HAP-1 (cell line): ENCODE measurements at regions of chr9 and their contacts with region 1.

Region 1: GRCh38 chr9:4077499-4078102 is 222.3 kb downstream of the GLIS3 start:
- DNase-seq: peak; percentile 67 to 95
- H3K4me3 ChIP-seq: no peak overlapping the region
- H3K4me1 ChIP-seq: peaks cover 4% of the 10 kb centered on the region
- H3K27me3 ChIP-seq: no peaks in the 10 kb centered on the region

Region 2: DNA sequence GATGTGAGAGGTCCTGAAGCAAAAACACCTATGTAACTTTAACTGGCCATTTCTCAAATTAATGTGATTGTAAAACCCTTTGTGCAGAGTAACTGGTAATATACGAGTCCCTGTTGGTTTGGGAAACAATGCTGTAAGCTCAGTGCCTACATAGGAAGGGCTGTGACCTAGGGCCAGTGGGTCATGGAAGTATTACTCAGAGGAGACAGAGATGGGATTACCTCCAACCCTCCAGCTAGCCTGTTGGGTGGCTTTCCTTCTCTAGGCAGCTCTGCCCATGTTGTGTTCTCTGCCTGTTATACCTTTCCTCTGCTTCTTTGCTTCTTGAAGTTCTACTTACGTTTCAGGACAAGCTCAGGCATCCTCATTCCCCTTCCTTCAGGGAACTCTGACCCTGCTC is 257.0 kb before region 1 on chr9:
- in situ Hi-C with region 1: no loop called
- DNase-seq: no peak
- H3K4me3 ChIP-seq: no peak overlapping the region
- H3K4me1 ChIP-seq: no peaks in the 10 kb centered on the region
- H3K27me3 ChIP-seq: no peaks in the 10 kb centered on the region

Region 3: DNA sequence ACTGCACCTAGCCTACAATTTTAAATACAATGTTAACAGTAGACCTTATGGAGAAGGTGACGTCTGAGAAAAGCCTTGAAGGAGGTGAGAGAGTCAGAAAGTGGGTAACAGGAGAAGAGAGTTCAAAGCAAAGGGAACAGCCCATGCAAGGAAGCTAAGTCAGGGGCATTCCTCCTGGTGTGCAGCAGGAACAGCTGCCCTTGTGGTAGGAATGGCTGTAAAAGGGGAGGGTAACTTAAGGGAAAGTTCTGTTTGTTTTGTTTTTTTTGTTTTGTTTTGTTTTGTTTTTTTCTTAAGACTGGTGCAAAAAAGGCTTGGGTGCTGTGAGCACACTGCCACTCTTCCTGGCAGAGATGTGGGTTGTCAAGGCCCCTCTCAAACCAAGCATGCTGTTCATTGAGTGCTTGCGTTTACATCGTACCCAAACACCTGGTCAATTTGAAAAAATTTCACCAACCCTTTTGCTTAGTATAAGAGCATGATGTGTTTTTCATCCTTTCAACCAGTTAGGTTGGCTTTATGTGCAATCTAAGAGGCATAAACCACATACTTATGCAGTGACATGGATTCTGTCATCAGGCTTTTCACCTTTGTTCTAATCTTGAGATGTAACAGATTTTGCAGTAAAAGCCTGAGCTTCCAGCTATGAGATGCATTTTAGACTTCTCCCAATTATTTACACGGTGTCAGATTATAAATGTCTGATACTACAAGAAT is 57.4 kb before region 1 on chr9:
- in situ Hi-C with region 1: no loop called
- DNase-seq: no peak
- H3K4me3 ChIP-seq: no peak overlapping the region
- H3K4me1 ChIP-seq: peaks cover 13% of the 10 kb centered on the region
- H3K27me3 ChIP-seq: no peaks in the 10 kb centered on the region

Region 4: DNA sequence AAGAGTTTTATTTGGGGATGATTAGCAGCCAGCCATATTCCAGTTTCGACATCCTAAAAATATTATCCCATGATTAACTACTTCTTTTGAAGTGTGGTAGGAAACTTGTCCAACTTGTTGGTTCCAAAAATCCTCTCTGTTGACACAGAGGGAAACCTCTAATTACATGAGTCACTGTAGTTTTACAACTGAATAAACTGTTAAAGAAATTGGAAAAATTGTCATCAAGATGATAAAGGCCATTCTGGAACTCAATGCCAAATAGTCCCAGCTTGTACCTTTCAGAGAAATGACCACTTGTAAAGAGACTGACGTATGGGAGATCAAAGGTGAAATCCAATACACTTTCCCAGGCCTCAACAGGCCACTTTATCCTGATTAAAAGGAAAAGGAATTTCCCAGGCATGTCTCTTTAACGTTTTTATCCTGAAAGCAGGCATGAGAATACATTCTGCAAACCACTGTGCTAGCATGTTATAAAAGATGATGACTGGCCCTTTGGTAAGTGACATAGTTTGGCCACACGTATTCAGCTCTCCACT is 39.3 kb before region 1 on chr9:
- in situ Hi-C with region 1: no loop called
- DNase-seq: no peak
- H3K4me3 ChIP-seq: no peak overlapping the region
- H3K4me1 ChIP-seq: peaks cover 37% of the 10 kb centered on the region
- H3K27me3 ChIP-seq: no peaks in the 10 kb centered on the region

Region 5: DNA sequence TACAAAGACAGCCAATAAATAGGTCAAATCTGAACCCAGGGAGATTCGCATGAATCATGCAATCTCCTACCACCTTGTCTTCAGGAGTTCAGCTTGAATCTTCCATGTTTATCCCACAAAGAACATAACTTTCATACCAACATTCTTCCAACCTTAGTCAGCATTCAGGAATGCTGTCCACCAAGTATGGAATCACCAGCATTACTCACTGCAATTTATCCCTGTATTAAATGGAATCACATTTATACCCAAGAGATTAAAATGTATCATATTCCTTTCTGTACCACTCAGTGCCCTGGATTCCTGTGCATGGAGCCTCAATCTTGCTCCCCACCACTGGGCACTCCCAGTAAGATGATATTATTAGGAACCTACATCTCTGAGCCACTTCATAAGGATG is 59.6 kb after region 1 on chr9:
- in situ Hi-C with region 1: loop called (anchors 10 kb)
- DNase-seq: peak in 1 of 2 experiments; percentile 10
- H3K4me3 ChIP-seq: no peak overlapping the region
- H3K4me1 ChIP-seq: peaks cover 16% of the 10 kb centered on the region
- H3K27me3 ChIP-seq: no peaks in the 10 kb centered on the region

Region 6: DNA sequence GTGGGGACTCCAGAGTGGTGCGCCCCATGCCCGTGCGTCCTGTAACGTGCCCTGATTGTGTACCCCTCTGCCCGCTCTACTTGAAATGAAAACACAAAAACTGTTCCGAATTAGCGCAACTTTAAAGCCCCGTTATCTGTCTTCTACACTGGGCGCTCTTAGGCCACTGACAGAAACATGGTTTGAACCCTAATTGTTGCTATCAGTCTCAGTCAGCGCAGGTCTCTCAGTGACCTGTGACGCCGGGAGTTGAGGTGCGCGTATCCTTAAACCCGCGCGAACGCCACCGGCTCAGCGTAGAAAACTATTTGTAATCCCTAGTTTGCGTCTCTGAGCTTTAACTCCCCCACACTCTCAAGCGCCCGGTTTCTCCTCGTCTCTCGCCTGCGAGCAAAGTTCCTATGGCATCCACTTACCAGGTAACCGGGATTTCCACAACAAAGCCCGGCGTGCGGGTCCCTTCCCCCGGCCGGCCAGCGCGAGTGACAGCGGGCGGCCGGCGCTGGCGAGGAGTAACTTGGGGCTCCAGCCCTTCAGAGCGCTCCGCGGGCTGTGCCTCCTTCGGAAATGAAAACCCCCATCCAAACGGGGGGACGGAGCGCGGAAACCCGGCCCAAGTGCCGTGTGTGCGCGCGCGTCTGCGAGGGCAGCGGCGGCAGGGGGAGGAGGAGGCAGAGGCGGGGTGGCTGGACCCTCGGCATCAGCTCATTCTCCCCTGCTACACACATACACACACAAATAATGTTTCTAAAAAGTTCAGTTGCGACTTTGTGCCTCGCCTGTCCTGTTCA is 221.6 kb after region 1 on chr9:
- in situ Hi-C with region 1: no loop called
- DNase-seq: peak; percentile 43 to 55
- H3K4me3 ChIP-seq: peak overlapping the region; percentile 48
- H3K4me1 ChIP-seq: peaks cover 15% of the 10 kb centered on the region
- H3K27me3 ChIP-seq: no peaks in the 10 kb centered on the region